Transverse colon (tissue), 4 donors: ENCODE measurements at regions of chr12 and their contacts with region 1.

Region 1: GRCh38 chr12:95169368-95169767 is 47.9 kb downstream of the FGD6 start:
- DNase-seq: peak; percentile 61
- H3K4me3 ChIP-seq: no peak overlapping the region
- H3K27ac ChIP-seq: peak overlapping the region; percentile 4 to 54 (median 44)
- H3K4me1 ChIP-seq: peaks cover 0 to 34% (median 19%) of the 10 kb centered on the region in 4 donors
- H3K27me3 ChIP-seq: no peaks in the 10 kb centered on the region
- CTCF ChIP-seq: no peak
- EP300 ChIP-seq: no peak
- POLR2A ChIP-seq: no peak

Region 2: GRCh38 chr12:94875525-94875924 is 293.8 kb before region 1 on chr12:
- in situ Hi-C with region 1: no loop called
- intact Hi-C with region 1: no loop called
- DNase-seq: no peak
- H3K4me3 ChIP-seq: no peak overlapping the region
- H3K27ac ChIP-seq: no peak overlapping the region
- H3K4me1 ChIP-seq: peaks cover 3 to 15% (median 14%) of the 10 kb centered on the region in 4 donors
- H3K27me3 ChIP-seq: peaks cover 68% of the 10 kb centered on the region
- CTCF ChIP-seq: peak in 2 of 5 experiments; percentile 16 to 28
- EP300 ChIP-seq: no peak
- POLR2A ChIP-seq: no peak

Region 3: DNA sequence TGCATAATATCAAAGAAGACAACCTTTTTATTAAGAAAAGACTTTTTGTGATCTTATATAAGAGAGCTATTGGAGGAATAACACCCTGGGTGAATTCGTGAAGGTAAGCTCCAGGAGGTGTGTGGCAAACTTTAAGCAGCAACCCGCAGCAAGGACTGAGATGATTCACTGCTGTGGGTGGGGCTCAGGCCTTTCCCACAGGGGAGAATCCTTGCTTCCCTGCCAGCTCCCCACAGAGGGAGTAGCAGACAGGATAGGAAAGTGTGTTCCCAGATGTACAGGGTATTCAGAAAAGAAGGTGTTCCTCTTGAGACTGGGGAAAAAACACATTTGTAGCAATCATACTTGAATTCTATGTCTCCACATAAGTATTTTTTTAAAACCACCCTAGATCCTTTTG is 175.1 kb before region 1 on chr12:
- in situ Hi-C with region 1: no loop called
- intact Hi-C with region 1: no loop called
- DNase-seq: no peak
- H3K4me3 ChIP-seq: no peak overlapping the region
- H3K27ac ChIP-seq: no peak overlapping the region
- H3K4me1 ChIP-seq: peaks cover 0 to 4% (median 1%) of the 10 kb centered on the region in 4 donors
- H3K27me3 ChIP-seq: no peaks in the 10 kb centered on the region
- CTCF ChIP-seq: no peak
- EP300 ChIP-seq: no peak
- POLR2A ChIP-seq: no peak

Region 4: DNA sequence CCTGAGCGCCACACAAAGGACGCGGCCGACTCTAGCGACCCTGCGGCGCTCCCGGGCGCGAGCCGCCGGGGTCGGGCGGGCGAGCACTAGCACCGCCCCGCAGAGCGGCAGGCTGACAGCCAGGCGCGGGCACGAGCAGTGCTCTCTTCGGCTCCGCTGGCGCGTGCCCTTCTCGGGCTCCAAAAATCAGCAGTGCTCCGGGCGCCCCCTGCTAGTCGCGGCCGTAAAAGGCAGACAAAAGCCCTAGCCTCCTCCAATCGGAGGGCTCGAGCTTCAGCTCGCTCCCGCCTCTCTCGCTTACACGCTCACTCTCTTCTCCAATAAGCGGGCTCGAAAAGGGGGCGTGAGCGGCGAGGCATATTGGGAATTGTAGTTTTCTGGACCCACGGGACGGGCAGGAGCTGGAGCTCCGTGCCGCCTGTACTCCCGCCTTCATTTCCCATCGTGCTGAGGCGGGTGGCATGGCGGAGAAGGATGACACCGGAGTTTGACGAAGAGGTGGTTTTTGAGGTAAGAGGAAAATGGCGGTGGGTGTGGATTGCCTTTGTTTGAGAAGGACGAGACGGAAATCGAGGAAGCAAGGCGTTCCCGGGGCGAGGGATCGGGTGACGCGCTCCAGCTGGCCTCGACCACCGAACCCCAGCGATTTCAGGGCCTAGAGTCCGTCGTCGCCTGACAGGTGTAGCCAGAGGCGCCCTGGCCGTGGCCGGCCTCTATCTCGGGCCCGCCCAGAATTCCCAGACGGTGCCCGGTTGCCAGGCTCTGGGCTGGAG is 48.2 kb after region 1 on chr12 and contains the starts of genes FGD6 and VEZT:
- in situ Hi-C with region 1: no loop called
- intact Hi-C with region 1: loop called (anchors 10 kb)
- DNase-seq: peak; percentile 99
- H3K4me3 ChIP-seq: peak within 1 kb of the TSS; percentile 70 to 83 (median 76)
- H3K27ac ChIP-seq: peak within 1 kb of the TSS; percentile 92 to 99 (median 96)
- H3K4me1 ChIP-seq: peaks cover 7 to 63% (median 27%) of the 10 kb centered on the region in 4 donors
- H3K27me3 ChIP-seq: no peaks in the 10 kb centered on the region
- CTCF ChIP-seq: peak; percentile 30 to 71 (median 51)
- EP300 ChIP-seq: no peak
- POLR2A ChIP-seq: peak; percentile 79
- total RNA-seq, gene FGD6: 25.0 to 37.0 (median 32.1) TPM
- total RNA-seq, gene VEZT: 55.2 to 130 (median 85.5) TPM

Region 5: GRCh38 chr12:95298916-95299315 is 129.5 kb after region 1 on chr12:
- in situ Hi-C with region 1: no loop called
- intact Hi-C with region 1: no loop called
- DNase-seq: no peak
- H3K4me3 ChIP-seq: no peak overlapping the region
- H3K27ac ChIP-seq: no peak overlapping the region
- H3K4me1 ChIP-seq: no peaks in the 10 kb centered on the region
- H3K27me3 ChIP-seq: no peaks in the 10 kb centered on the region
- CTCF ChIP-seq: no peak
- EP300 ChIP-seq: no peak
- POLR2A ChIP-seq: no peak